Left colon (tissue), 2 donors: ENCODE measurements at regions of chr12 and their contacts with region 1.

Region 1: DNA sequence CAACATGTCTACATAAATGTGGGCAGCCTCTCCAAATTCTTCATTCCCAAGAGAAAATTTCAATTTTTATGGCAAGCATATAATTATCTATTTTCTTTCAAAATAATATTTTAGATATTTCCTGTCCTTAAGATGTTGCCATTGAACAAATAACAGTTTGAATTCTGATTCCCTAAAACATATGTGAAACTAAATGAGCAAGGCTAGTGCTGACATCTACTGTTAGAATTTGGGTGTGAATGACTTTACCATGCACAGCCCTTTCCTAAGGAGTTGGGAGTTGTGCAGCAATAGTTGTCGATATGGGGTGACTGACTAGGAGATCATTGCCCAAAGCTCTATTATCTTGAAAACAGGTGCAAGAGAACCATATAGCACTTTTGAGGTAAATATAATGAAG is 108.2 kb upstream of the SLC38A4 start:
- DNase-seq: no peak
- ATAC-seq: peak; percentile 62

Region 2: GRCh38 chr12:46675736-46676135 is 258.2 kb before region 1 on chr12:
- intact Hi-C with region 1: loop called in 1 of 2 experiments (anchors 5 kb)
- DNase-seq: peak in 1 of 2 donors; percentile 21
- ATAC-seq: peak; percentile 54